Activated T-helper 2 cell treated with anti-CD3 and anti-CD28 coated beads, Interferon-gamma antibody, Interleukin-2, Interleukin-4, amounts not matched to agents 10 μg/mL and 5 μg/mL and 100 μg/mL, durations not matched to agents 14 hours and 24 hours and 36 hours (primary cell): ENCODE measurements at regions of chrX and their contacts with region 1.

Region 1: GRCh38 chrX:136496770-136497598 is at the start of gene HTATSF1:
- DNase-seq: peak; percentile 83
- H3K4me3 Mint-ChIP-seq: peak within 1 kb of the TSS; percentile 93
- H3K27ac Mint-ChIP-seq: peak within 1 kb of the TSS; percentile 95
- H3K4me1 Mint-ChIP-seq: peaks cover 11% of the 10 kb centered on the region
- H3K27me3 Mint-ChIP-seq: peaks cover 3% of the 10 kb centered on the region
- total RNA-seq, gene HTATSF1: 43.8 and 47.3 TPM in 2 replicates

Region 2: GRCh38 chrX:135973548-135974278 is 523.3 kb before region 1 on chrX and contains the start of gene MMGT1:
- intact Hi-C with region 1: loop called (anchors 5 kb)
- DNase-seq: peak; percentile 74
- H3K4me3 Mint-ChIP-seq: peak within 1 kb of the TSS; percentile 97
- H3K27ac Mint-ChIP-seq: peak within 1 kb of the TSS; percentile 97
- H3K4me1 Mint-ChIP-seq: peaks cover 31% of the 10 kb centered on the region
- H3K27me3 Mint-ChIP-seq: peaks cover 11% of the 10 kb centered on the region
- total RNA-seq, gene MMGT1: 24.0 and 24.6 TPM in 2 replicates

Region 3: DNA sequence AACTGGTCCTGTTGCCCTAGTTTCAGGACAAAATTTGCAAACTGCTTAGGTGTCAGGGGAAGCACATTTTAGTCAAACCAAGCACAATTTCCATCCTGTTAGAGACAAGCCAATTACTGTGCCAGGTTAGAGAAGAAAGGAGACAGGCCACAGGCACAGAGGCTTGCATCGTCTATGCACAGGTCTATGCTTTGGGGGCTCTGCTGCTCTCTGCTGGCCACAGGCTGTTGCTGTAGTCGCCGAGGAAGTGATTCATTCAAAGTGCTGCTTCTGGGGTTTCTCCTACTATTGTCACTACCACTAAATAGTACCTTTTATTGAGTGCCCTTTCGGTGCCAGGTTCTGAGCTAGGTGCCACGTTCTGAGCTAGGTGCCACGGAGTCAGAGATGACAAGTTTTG is 80.6 kb after region 1 on chrX:
- intact Hi-C with region 1: loop called (anchors 2 kb)
- DNase-seq: peak; percentile 57
- H3K4me3 Mint-ChIP-seq: no peak overlapping the region
- H3K27ac Mint-ChIP-seq: peak overlapping the region; percentile 64
- H3K4me1 Mint-ChIP-seq: peaks cover 33% of the 10 kb centered on the region
- H3K27me3 Mint-ChIP-seq: no peaks in the 10 kb centered on the region

Region 4: GRCh38 chrX:136909706-136910564 is 413.0 kb after region 1 on chrX:
- intact Hi-C with region 1: loop called (anchors 10 kb)
- DNase-seq: peak; percentile 50
- H3K4me3 Mint-ChIP-seq: peak overlapping the region; percentile 89
- H3K27ac Mint-ChIP-seq: peak overlapping the region; percentile 79
- H3K4me1 Mint-ChIP-seq: peaks cover 12% of the 10 kb centered on the region
- H3K27me3 Mint-ChIP-seq: no peaks in the 10 kb centered on the region